Activated CD4-positive, alpha-beta memory T cell treated with anti-CD3 and anti-CD28 coated beads for 36 hours (primary cell): ENCODE measurements at regions of chr11 and their contacts with region 1.

Region 1: GRCh38 chr11:116691771-116692177 is 81.0 kb downstream of the BUD13 start:
- DNase-seq: peak; percentile 71
- H3K4me3 Mint-ChIP-seq: no peak overlapping the region
- H3K27ac Mint-ChIP-seq: no peak overlapping the region
- H3K4me1 Mint-ChIP-seq: no peaks in the 10 kb centered on the region
- H3K27me3 Mint-ChIP-seq: peaks cover 2% of the 10 kb centered on the region

Region 2: GRCh38 chr11:116454020-116454645 is 237.6 kb before region 1 on chr11:
- CTCF ChIA-PET with region 1: interaction called, 4 read pairs
- POLR2A ChIA-PET with region 1: no interaction called
- intact Hi-C with region 1: loop called (anchors 5 kb)
- DNase-seq: peak; percentile 29
- H3K4me3 Mint-ChIP-seq: no peak overlapping the region
- H3K27ac Mint-ChIP-seq: no peak overlapping the region
- H3K4me1 Mint-ChIP-seq: no peaks in the 10 kb centered on the region
- H3K27me3 Mint-ChIP-seq: no peaks in the 10 kb centered on the region

Region 3: DNA sequence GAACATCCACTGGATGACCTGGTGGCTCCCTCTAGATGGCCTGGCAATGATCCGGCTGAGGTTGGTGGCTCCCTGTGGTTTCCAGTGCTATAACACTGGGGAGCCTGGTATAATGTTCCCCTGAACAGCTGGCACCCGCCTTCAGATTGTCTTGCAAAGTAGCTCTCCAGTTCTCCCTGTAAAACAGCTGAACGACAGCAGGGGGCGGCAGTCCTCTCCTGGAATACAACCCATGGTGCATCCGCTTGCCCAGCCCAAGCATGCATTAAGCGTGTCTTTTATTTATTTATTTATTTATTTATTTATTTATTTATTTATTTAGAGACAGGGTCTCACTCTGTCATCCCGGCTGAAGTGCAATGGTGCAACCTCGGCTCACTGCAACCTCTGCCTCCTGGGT is 177.9 kb before region 1 on chr11:
- CTCF ChIA-PET with region 1: interaction called, 32 read pairs
- POLR2A ChIA-PET with region 1: no interaction called
- intact Hi-C with region 1: loop called (anchors 5 kb)
- DNase-seq: peak; percentile 53
- H3K4me3 Mint-ChIP-seq: no peak overlapping the region
- H3K27ac Mint-ChIP-seq: no peak overlapping the region
- H3K4me1 Mint-ChIP-seq: no peaks in the 10 kb centered on the region
- H3K27me3 Mint-ChIP-seq: peaks cover 21% of the 10 kb centered on the region

Region 4: DNA sequence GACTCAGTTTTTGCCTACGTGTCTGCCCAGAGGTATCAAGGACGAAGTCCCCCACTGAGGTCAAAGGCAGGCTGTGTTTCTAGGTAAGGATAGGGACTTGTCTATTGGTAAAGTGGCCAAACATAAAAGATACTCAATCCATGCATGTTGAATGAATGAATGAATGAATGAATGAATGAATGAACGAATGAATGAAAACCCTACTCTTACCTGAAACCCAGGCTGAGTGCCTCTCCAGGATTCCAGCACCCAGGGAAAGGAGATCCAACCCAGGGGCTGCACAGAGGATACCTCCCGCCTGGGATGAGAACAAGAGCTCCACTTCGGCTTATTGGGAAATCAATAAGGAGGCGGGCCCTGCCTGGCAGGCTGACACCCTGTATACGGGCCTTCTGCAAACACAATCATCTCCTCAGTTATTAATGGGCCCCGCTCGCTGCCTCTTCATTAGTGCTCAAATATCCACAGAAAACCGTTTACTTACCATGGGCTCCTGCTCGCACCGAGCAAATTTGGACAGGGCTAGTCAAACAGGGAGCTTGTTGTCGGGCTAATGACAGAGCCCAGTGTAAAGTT is 96.4 kb before region 1 on chr11:
- CTCF ChIA-PET with region 1: no interaction called
- POLR2A ChIA-PET with region 1: no interaction called
- intact Hi-C with region 1: no loop called
- DNase-seq: no peak
- H3K4me3 Mint-ChIP-seq: no peak overlapping the region
- H3K27ac Mint-ChIP-seq: no peak overlapping the region
- H3K4me1 Mint-ChIP-seq: no peaks in the 10 kb centered on the region
- H3K27me3 Mint-ChIP-seq: peaks cover 10% of the 10 kb centered on the region